AG04449 (cell line): ENCODE measurements at regions of chr19 and their contacts with region 1.

Region 1: DNA sequence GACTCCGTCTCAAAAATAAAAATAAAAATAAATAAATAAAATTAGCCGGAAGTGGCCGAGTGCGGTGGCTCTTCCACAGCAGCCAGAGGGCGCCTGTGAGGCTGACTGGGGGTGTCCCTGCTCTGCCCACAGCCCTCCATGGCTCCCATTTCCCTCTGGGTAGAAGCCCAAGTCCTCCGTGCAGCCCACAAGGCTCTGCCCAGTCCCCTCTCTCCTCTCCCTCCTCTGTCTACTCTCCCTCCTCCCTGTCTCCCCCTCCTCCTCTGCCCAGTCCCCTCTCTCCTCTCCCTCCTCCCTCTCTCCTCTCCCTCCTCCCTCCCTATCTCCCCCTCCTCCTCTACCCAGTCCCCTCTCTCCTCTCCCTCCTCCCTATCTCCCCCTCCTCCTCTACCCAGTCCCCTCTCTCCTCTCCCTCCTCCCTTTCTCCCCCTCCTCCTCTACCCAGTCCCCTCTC is 20.4 kb downstream of the MISP start:
- DNase-seq: no peak
- H3K4me3 ChIP-seq: no peak overlapping the region
- CTCF ChIP-seq: peak; percentile 52

Region 2: GRCh38 chr19:752652-753517 is 18.5 kb before region 1 on chr19:
- CTCF ChIA-PET with region 1: interaction called, 11 read pairs
- POLR2A ChIA-PET with region 1: no interaction called
- DNase-seq: peak; percentile 26
- H3K4me3 ChIP-seq: no peak overlapping the region
- CTCF ChIP-seq: no peak

Region 3: GRCh38 chr19:797528-798414 is 26.4 kb after region 1 on chr19:
- CTCF ChIA-PET with region 1: interaction called, 17 read pairs
- POLR2A ChIA-PET with region 1: no interaction called
- DNase-seq: peak; percentile 21
- H3K4me3 ChIP-seq: peak overlapping the region; percentile 87
- CTCF ChIP-seq: no peak

Region 4: GRCh38 chr19:860481-861101 is 89.2 kb after region 1 on chr19:
- CTCF ChIA-PET with region 1: interaction called, 18 read pairs
- POLR2A ChIA-PET with region 1: no interaction called
- DNase-seq: no peak
- H3K4me3 ChIP-seq: peak overlapping the region; percentile 47
- CTCF ChIP-seq: peak; percentile 37